HepG2 (cell line): ENCODE measurements at regions of chr4 and their contacts with region 1.

Region 1: GRCh38 chr4:174222266-174222872 is 61.1 kb downstream of the FBXO8 start:
- DNase-seq: peak; percentile 16
- ATAC-seq: peak; percentile 75
- H3K4me3 ChIP-seq: no peak overlapping the region
- H3K27ac ChIP-seq: no peak overlapping the region
- H3K4me1 ChIP-seq: 0 out of 2 replicates have a peak, but pooled peaks cover 3% of the 10 kb centered on the region
- H3K27me3 ChIP-seq: peaks cover 1 to 16% of the 10 kb centered on the region in 2 experiments; a peak in 4 of 5 replicates
- CTCF ChIP-seq: peak; percentile 65
- EP300 ChIP-seq: no peak
- POLR2A ChIP-seq: no peak
- RAD21 ChIP-seq: no peak; the same call in 1 of the 2 replicates

Region 2: GRCh38 chr4:173794662-173795061 is 427.7 kb before region 1 on chr4:
- CTCF ChIA-PET with region 1: no interaction called
- POLR2A ChIA-PET with region 1: no interaction called
- in situ Hi-C with region 1: no loop called
- intact Hi-C with region 1: no loop called
- DNase-seq: no peak
- ATAC-seq: no peak
- H3K4me3 ChIP-seq: no peak overlapping the region
- H3K27ac ChIP-seq: no peak overlapping the region
- H3K4me1 ChIP-seq: no peaks in the 10 kb centered on the region
- H3K27me3 ChIP-seq: no peaks in the 10 kb centered on the region
- CTCF ChIP-seq: no peak
- EP300 ChIP-seq: no peak
- POLR2A ChIP-seq: no peak
- RAD21 ChIP-seq: no peak

Region 3: GRCh38 chr4:174260099-174260498 is 37.7 kb after region 1 on chr4:
- CTCF ChIA-PET with region 1: no interaction called
- POLR2A ChIA-PET with region 1: no interaction called
- in situ Hi-C with region 1: no loop called
- intact Hi-C with region 1: no loop called
- DNase-seq: peak; percentile 70
- ATAC-seq: peak; percentile 88
- H3K4me3 ChIP-seq: no peak overlapping the region
- H3K27ac ChIP-seq: no peak overlapping the region
- H3K4me1 ChIP-seq: peaks cover 8% of the 10 kb centered on the region
- H3K27me3 ChIP-seq: no peaks in the 10 kb centered on the region; a peak in 1 of 5 replicates
- CTCF ChIP-seq: no peak
- EP300 ChIP-seq: no peak
- POLR2A ChIP-seq: no peak
- RAD21 ChIP-seq: no peak

Region 4: GRCh38 chr4:174282836-174283506 is 60.6 kb after region 1 on chr4:
- CTCF ChIA-PET with region 1: no interaction called
- POLR2A ChIA-PET with region 1: no interaction called
- in situ Hi-C with region 1: no loop called
- intact Hi-C with region 1: loop called (anchors 2 kb)
- DNase-seq: peak; percentile 93
- ATAC-seq: peak; percentile 98
- H3K4me3 ChIP-seq: peak overlapping the region; percentile 92 to 95 (median 93)
- H3K27ac ChIP-seq: peak overlapping the region; percentile 100
- H3K4me1 ChIP-seq: peaks cover 25% of the 10 kb centered on the region
- H3K27me3 ChIP-seq: no peaks in the 10 kb centered on the region; a peak in 1 of 5 replicates
- CTCF ChIP-seq: no peak
- EP300 ChIP-seq: no peak
- POLR2A ChIP-seq: no peak
- RAD21 ChIP-seq: no peak

Region 5: GRCh38 chr4:174318829-174319764 is 96.7 kb after region 1 on chr4:
- CTCF ChIA-PET with region 1: interaction called, 31 read pairs
- POLR2A ChIA-PET with region 1: no interaction called
- in situ Hi-C with region 1: loop called (anchors 5 kb)
- intact Hi-C with region 1: loop called (anchors 1 kb)
- DNase-seq: peak; percentile 31
- ATAC-seq: no peak
- H3K4me3 ChIP-seq: no peak overlapping the region
- H3K27ac ChIP-seq: no peak overlapping the region
- H3K4me1 ChIP-seq: no peaks in the 10 kb centered on the region
- H3K27me3 ChIP-seq: no peaks in the 10 kb centered on the region
- CTCF ChIP-seq: peak; percentile 53
- EP300 ChIP-seq: no peak
- POLR2A ChIP-seq: no peak
- RAD21 ChIP-seq: 0 out of 2 replicates have a peak, but pooled peaks have one; percentile 33

Region 6: GRCh38 chr4:174324725-174325124 is 102.4 kb after region 1 on chr4:
- CTCF ChIA-PET with region 1: interaction called, 31 read pairs
- POLR2A ChIA-PET with region 1: no interaction called
- in situ Hi-C with region 1: loop called (anchors 5 kb)
- intact Hi-C with region 1: loop called (anchors 1 kb)
- DNase-seq: no peak
- ATAC-seq: no peak
- H3K4me3 ChIP-seq: no peak overlapping the region
- H3K27ac ChIP-seq: no peak overlapping the region
- H3K4me1 ChIP-seq: no peaks in the 10 kb centered on the region
- H3K27me3 ChIP-seq: no peaks in the 10 kb centered on the region
- CTCF ChIP-seq: no peak
- EP300 ChIP-seq: no peak
- POLR2A ChIP-seq: no peak
- RAD21 ChIP-seq: no peak

Region 7: GRCh38 chr4:174631901-174632758 is 409.8 kb after region 1 on chr4:
- CTCF ChIA-PET with region 1: no interaction called
- POLR2A ChIA-PET with region 1: no interaction called
- in situ Hi-C with region 1: loop called (anchors 25 kb)
- intact Hi-C with region 1: no loop called
- DNase-seq: peak; percentile 20
- ATAC-seq: peak; percentile 66; the same call in 1 of the 3 replicates
- H3K4me3 ChIP-seq: no peak overlapping the region
- H3K27ac ChIP-seq: no peak overlapping the region
- H3K4me1 ChIP-seq: no peaks in the 10 kb centered on the region
- H3K27me3 ChIP-seq: no peaks in the 10 kb centered on the region
- CTCF ChIP-seq: peak; percentile 61
- EP300 ChIP-seq: no peak
- POLR2A ChIP-seq: no peak
- RAD21 ChIP-seq: peak; percentile 40

Region 8: DNA sequence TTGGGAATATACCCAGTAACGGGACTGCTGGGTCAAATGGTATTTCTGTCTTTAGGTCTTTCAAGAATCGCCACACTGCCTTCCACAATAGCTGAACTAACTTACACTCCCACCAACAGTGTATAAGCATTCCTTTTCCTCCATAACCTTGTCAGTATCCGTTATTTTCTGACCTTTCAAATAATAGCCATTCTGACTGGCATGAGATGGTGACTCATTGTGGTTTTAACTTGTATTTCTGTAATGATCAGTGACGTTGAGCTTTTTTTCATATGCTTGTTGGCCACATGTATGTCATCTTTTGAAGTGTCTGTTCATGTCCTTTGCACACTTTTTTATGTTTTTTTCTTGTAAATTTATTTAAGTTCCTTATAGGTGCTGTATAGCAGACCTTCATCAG is 777.0 kb after region 1 on chr4:
- CTCF ChIA-PET with region 1: no interaction called
- POLR2A ChIA-PET with region 1: no interaction called
- in situ Hi-C with region 1: no loop called
- intact Hi-C with region 1: no loop called
- DNase-seq: no peak
- ATAC-seq: no peak
- H3K4me3 ChIP-seq: no peak overlapping the region
- H3K27ac ChIP-seq: no peak overlapping the region
- H3K4me1 ChIP-seq: no peaks in the 10 kb centered on the region
- H3K27me3 ChIP-seq: no peaks in the 10 kb centered on the region
- CTCF ChIP-seq: no peak
- EP300 ChIP-seq: no peak
- POLR2A ChIP-seq: no peak
- RAD21 ChIP-seq: no peak